Naive thymus-derived CD4-positive, alpha-beta T cell (primary cell): ENCODE measurements at regions of chr16 and their contacts with region 1.

Region 1: DNA sequence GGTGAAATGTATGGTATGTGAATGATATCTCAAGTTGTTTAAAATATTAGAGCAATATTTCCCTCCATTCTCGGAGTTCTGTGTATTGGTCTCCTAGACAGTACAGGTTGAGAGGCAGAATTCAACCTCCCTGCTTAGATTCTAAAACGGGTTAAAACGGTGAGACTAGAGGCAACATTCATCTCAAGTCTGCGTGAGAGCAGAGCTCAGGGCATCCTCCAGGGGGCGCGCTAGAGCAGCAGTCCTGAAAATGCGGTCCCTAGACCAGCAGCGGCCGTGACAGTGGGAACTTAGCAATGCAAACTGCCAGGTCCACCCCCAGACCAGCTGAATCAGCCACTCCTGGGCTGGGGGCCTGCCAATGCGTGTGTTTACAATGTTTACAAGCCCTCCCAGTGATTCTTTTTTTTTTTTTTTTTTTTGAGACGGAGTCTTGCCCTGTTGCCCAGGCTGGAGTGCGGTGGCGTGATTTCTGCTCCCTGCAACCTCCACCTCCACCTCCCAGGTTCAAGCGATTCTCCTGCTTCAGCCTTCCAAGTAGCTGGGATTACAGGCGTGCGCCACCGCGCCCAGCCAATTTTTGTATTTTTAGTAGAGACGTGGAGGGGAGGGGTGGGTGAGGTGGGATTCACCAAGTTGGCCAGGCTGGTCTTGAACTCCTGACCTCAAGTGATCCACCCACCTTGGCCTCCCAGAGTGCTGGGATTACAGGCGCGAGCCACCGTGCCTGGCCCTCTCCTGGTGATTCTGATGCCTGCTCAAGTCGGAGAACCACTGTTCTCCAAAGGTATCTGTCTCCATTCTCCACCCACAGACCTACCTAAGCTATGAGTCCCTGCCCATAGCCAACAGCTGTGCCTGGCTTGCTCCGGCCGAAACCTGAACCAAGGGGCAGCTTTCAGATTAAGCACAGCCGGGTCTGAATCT is 24.2 kb downstream of the KLHL36 start:
- DNase-seq: peak; percentile 58 to 85 (median 74)
- ATAC-seq: peak; percentile 96
- H3K4me3 ChIP-seq: no peak overlapping the region
- H3K4me3 Mint-ChIP-seq: no peak overlapping the region
- H3K27ac ChIP-seq: no peak overlapping the region
- H3K27ac Mint-ChIP-seq: peak overlapping the region in 3 of 9 donors; percentile 6 to 54 (median 52)
- H3K4me1 ChIP-seq: no peaks in the 10 kb centered on the region
- H3K4me1 Mint-ChIP-seq: peaks cover 5 to 17% (median 8%) of the 10 kb centered on the region in 7 donors
- H3K27me3 ChIP-seq: no peaks in the 10 kb centered on the region
- H3K27me3 Mint-ChIP-seq: peaks cover 0 to 19% (median 0%) of the 10 kb centered on the region in 5 donors

Region 2: DNA sequence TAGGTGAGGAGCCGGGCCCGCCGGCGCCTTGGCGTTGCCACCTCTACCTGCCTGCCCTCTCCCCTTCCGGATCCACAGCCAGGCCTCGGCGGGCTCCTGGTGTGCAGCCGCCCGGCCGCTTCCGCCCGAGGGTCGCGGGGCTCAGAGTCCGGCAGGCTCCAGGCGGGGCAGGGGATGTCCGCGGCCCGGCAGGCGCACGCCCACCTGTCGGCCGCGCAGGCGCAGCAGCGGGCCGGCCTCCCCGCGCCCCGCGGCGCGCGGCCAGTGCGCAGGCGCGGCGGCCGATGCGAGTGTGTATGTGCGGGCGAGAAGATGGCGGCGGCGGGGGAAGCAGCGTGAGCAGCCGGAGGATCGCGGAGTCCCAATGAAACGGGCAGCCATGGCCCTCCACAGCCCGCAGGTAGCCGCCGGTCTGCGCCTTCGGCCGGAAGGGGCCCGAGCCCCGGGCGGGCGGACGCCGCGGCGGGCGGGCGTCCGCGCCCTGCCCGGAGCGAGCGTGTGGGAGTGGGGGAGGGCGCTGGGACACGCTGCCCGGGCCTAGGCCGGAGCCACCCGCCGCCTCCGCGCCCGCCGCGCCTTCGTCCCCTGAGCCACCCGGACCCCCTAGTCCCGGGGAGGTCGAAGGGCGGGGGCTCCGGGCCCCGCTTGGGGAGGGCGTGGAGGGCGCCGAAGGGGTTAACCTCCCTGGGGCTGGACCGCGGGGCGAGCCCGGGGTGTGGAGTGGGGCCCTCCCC is 27.3 kb after region 1 on chr16 and contains the start of gene USP10:
- CTCF ChIA-PET with region 1: interaction called, 6 read pairs
- POLR2A ChIA-PET with region 1: interaction called, 3 read pairs
- intact Hi-C with region 1: loop called (anchors 1 to 2 kb)
- DNase-seq: peak; percentile 75 to 93 (median 88)
- ATAC-seq: peak; percentile 91
- H3K4me3 ChIP-seq: peak within 1 kb of the TSS; percentile 61
- H3K4me3 Mint-ChIP-seq: peak within 1 kb of the TSS; percentile 92 to 99 (median 98)
- H3K27ac ChIP-seq: peak within 1 kb of the TSS; percentile 87
- H3K27ac Mint-ChIP-seq: peak within 1 kb of the TSS; percentile 92 to 99 (median 96)
- H3K4me1 ChIP-seq: peaks cover 11 to 22% of the 10 kb centered on the region in 2 donors
- H3K4me1 Mint-ChIP-seq: peaks cover 19 to 46% (median 42%) of the 10 kb centered on the region in 7 donors
- H3K27me3 ChIP-seq: no peaks in the 10 kb centered on the region
- H3K27me3 Mint-ChIP-seq: peaks cover 0 to 4% (median 0%) of the 10 kb centered on the region in 5 donors
- total RNA-seq, gene USP10: 88.4 to 113 (median 112) TPM

Region 3: DNA sequence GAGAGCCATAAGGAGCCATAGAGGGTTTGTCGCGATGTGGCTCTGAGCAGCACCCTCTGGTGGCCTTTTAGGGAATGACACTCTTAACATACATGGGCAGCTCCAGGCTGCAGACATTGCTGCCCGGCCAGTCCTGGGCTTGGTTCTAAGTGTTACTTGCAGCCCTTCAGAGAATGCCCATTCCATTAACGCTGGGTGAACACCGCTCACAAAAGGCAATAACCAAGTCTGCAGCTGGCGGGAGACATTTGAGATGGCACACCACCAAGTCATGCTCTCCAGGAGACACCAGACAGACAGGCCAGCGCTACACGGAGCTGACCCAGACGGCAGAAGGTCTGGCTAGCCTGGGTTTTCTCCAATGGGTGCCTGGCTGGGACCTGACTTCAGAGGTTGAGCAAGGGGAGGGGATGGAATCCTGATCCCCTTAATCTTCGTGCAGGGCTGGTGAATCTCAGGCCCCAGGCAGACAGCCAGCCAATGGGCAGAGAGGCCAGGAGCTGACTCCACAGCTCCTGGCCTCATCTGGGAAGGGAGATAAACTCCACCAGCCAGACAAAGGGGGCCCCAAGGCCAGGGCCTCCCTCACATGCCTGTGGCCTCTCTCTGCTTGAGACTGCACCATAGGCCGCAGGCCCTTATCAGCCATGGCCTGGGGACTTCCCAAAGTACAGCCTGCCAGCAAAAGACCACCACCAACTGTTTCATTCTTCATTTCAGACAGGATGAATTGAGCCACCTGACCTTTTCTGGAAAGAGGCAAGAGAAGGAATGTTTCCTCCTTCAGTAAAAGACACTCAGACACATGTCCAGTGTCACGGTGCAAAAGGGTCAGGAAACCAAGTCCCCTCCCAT is 280.0 kb after region 1 on chr16:
- CTCF ChIA-PET with region 1: no interaction called
- POLR2A ChIA-PET with region 1: no interaction called
- intact Hi-C with region 1: loop called in 1 of 2 experiments (anchors 10 kb)
- DNase-seq: peak; percentile 28 to 80 (median 68)
- ATAC-seq: peak; percentile 94
- H3K4me3 ChIP-seq: no peak overlapping the region
- H3K4me3 Mint-ChIP-seq: no peak overlapping the region
- H3K27ac ChIP-seq: no peak overlapping the region
- H3K27ac Mint-ChIP-seq: peak overlapping the region in 1 of 9 donors; percentile 9
- H3K4me1 ChIP-seq: peaks cover 0 to 3% of the 10 kb centered on the region in 2 donors
- H3K4me1 Mint-ChIP-seq: peaks cover 0 to 12% (median 4%) of the 10 kb centered on the region in 7 donors
- H3K27me3 ChIP-seq: no peaks in the 10 kb centered on the region
- H3K27me3 Mint-ChIP-seq: peaks cover 0 to 4% (median 0%) of the 10 kb centered on the region in 5 donors

Region 4: DNA sequence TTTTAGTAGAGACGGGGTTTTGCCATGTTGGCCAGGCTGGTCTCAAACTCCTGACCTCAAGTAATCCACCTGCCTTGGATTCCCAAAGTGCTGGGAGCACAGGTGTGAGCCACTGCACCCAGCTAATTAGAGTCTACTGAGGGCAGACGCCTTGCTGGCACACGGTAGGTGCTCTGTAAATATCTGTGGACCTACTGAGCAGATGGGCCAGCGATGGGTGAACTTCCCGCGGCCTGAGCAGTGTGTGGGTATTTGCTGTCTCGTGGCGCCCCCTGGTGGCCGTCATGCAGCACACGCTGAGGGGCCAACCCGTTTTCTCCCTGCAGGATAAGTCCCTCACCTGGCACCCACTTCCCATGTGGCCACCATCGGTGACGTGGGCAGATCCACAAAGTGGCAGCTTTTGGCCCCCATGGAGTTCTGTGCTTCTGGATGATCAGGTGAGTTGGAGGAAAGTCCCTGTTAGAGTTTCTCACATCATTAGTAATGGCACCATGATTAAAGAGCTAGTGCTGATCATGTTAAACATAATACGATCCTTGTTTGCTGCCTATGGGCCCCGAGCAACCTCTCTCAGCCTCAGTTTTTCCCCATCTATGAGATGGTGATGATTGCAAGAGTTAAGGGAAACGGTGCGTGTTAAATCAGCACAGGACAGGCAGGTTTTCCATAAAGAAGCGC is 298.0 kb after region 1 on chr16:
- CTCF ChIA-PET with region 1: interaction called, 3 read pairs
- POLR2A ChIA-PET with region 1: no interaction called
- intact Hi-C with region 1: loop called in 1 of 2 experiments (anchors 1 kb)
- DNase-seq: peak; percentile 60 to 79 (median 74)
- ATAC-seq: peak; percentile 92
- H3K4me3 ChIP-seq: no peak overlapping the region
- H3K4me3 Mint-ChIP-seq: no peak overlapping the region
- H3K27ac ChIP-seq: no peak overlapping the region
- H3K27ac Mint-ChIP-seq: peak overlapping the region in 3 of 9 donors; percentile 9 to 78 (median 46)
- H3K4me1 ChIP-seq: peaks cover 0 to 6% of the 10 kb centered on the region in 2 donors
- H3K4me1 Mint-ChIP-seq: peaks cover 0 to 8% (median 4%) of the 10 kb centered on the region in 7 donors
- H3K27me3 ChIP-seq: no peaks in the 10 kb centered on the region
- H3K27me3 Mint-ChIP-seq: no peaks in the 10 kb centered on the region